Esophagus muscularis mucosa (tissue), 4 donors: ENCODE measurements at regions of chr7 and their contacts with region 1.

Region 1: DNA sequence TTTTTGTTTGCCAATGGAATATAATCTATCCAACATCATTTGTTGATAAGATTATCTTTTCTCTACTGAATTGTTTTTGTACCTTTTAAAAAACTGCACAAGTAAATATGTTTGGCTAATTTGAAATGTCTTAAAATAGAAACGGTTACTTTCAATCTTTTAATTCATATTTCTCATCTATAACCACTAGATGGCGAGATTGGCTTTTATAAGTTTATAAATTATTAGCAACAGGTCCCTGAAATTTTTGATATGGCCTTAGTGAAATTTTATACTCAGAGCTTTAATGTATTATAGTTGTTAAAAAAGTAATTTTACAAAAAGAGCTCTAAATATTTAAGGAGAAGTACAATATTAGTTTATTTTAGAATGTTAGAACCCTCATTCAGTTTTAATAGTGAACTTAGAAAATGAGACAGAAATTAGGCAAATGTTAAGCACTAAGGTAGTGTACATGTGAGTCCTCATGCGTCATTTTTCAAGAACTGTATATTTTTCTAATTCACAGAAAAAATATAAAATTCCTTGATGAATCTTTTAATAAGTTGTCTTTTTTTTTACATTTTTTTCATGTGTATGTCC is 592.5 kb downstream of the ARL4A start:
- DNase-seq: no peak
- H3K4me3 ChIP-seq: no peak overlapping the region
- H3K27ac ChIP-seq: no peak overlapping the region
- H3K4me1 ChIP-seq: no peaks in the 10 kb centered on the region
- H3K27me3 ChIP-seq: no peaks in the 10 kb centered on the region
- CTCF ChIP-seq: peak; percentile 33 to 51 (median 51)
- EP300 ChIP-seq: no peak
- POLR2A ChIP-seq: no peak

Region 2: GRCh38 chr7:13742811-13743210 is 462.9 kb after region 1 on chr7:
- intact Hi-C with region 1: loop called (anchors 5 kb)
- DNase-seq: no peak
- H3K4me3 ChIP-seq: no peak overlapping the region
- H3K27ac ChIP-seq: peak overlapping the region in 1 of 4 donors; percentile 6
- H3K4me1 ChIP-seq: peaks cover 0 to 28% (median 23%) of the 10 kb centered on the region in 4 donors
- H3K27me3 ChIP-seq: no peaks in the 10 kb centered on the region
- CTCF ChIP-seq: peak in 2 of 3 experiments; percentile 47 to 49
- EP300 ChIP-seq: no peak
- POLR2A ChIP-seq: no peak

Region 3: GRCh38 chr7:14457568-14458453 is 1177.9 kb after region 1 on chr7:
- intact Hi-C with region 1: loop called (anchors 5 kb)
- DNase-seq: no peak
- H3K4me3 ChIP-seq: peak overlapping the region in 1 of 4 donors; percentile 27
- H3K27ac ChIP-seq: no peak overlapping the region
- H3K4me1 ChIP-seq: peaks cover 0 to 3% (median 0%) of the 10 kb centered on the region in 4 donors
- H3K27me3 ChIP-seq: no peaks in the 10 kb centered on the region
- CTCF ChIP-seq: peak; percentile 68 to 84 (median 82)
- EP300 ChIP-seq: no peak
- POLR2A ChIP-seq: no peak

Region 4: DNA sequence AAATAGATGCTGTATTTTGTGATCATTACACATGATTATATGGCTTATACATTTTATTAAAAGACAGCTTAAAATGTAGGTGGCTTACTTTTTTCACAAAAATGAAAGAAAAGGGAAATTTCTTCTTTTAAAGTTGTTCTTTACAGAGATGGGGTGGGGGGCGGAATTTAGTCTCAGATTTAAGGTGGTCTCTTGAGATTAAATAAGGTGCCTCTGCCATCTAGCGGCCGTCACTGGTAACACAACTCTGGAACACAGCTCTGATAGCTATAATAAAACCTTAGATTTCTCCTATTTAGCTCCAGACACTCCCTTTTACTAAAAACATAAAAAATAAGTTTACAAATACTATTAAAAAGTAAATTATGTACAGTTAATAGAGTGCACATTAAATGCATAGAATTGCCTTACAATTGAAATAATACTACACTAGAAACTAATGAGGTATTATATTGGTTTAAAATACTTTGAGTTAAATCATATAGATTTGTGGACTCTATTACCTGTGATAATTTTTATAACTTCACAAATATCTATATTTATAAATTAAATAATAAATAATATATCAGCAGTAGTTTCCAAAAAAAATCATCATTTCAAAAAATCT is 1411.8 kb after region 1 on chr7:
- intact Hi-C with region 1: loop called (anchors 5 kb)
- DNase-seq: no peak
- H3K4me3 ChIP-seq: no peak overlapping the region
- H3K27ac ChIP-seq: no peak overlapping the region
- H3K4me1 ChIP-seq: no peaks in the 10 kb centered on the region
- H3K27me3 ChIP-seq: no peaks in the 10 kb centered on the region
- CTCF ChIP-seq: peak; percentile 78 to 86 (median 79)
- EP300 ChIP-seq: no peak
- POLR2A ChIP-seq: no peak